K562 (cell line): ENCODE measurements at regions of chrX and their contacts with region 1.

Region 1: DNA sequence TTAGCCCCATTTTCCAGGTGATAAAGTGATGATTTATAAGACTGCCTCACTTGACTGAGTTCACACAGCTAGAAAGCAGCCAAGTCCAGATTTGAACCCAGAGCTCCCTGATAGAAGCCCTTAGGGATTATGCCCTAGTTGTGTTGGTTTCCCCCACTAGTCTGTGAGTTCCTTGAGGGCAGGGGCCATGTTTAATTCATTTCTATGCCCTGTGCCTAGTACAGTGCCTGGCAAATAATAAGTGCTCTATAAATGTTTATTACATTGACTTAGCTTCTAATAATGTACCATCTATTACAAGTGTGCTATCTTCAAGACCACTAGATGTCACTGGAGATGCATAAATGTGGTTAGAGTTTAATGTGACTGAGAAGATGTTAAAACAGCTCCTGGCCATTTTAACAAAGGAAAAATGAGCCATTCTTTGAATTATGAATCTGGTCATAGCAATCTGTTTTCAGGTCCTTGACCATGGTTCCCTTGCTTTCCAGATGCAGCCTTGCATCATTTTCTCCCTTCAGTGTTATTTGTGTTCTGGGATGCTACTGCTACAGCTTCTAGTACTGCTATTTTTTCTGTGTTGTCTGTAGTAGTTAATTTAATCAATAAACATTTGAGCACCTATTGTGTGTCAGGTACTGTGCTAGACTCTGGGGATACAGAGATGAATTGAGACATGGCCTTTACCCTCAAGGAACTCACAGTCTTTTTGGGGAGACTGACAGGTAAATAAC is 43.2 kb downstream of the SLC9A6 start:
- DNase-seq: peak in 3 of 4 experiments; percentile 13 to 46 (median 16)
- ATAC-seq: peak; percentile 75
- H3K4me3 ChIP-seq: no peak overlapping the region
- H3K27ac ChIP-seq: no peak overlapping the region
- H3K4me1 ChIP-seq: no peaks in the 10 kb centered on the region
- H3K27me3 ChIP-seq: no peaks in the 10 kb centered on the region
- CTCF ChIP-seq: peak; percentile 47 to 68 (median 53); a peak in 4 of 6 replicates
- EP300 ChIP-seq: no peak
- POLR2A ChIP-seq: no peak
- RAD21 ChIP-seq: peak; percentile 72 to 86

Region 2: DNA sequence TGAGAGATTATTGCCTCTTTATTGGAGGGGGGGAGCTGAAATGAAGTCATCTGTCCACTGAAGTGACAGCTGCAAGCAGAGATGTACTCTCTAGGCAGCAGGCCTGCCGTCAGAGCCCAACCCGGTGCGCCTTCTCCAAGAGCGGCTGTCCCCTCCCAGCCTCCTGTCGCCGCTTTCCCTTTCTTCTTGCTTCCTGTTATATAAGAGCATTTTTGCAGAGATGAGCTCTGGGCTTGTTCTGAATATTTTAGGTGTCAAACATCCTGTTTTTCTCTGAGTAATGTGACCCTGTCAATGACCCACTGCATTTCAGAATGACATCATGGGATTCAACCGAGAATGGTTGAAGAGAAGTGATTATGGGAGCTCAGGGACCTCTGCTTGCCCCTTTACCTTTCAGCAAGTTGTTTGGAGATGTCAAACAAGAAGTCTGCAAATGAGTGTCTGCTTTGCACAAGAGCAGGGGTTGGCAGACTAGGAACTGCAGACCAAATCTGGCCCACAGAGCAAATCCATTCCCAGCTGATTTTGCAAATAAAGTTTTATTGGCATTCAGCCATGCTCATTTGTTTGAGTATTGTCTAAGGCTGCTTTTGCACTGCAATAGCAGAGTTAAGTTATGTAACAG is 36.7 kb after region 1 on chrX:
- CTCF ChIA-PET with region 1: no interaction called
- POLR2A ChIA-PET with region 1: no interaction called
- in situ Hi-C with region 1: no loop called
- intact Hi-C with region 1: no loop called
- DNase-seq: no peak
- ATAC-seq: no peak
- H3K4me3 ChIP-seq: no peak overlapping the region
- H3K27ac ChIP-seq: no peak overlapping the region
- H3K4me1 ChIP-seq: no peaks in the 10 kb centered on the region; a peak in 1 of 5 replicates
- H3K27me3 ChIP-seq: peaks cover 26 to 28% of the 10 kb centered on the region in 2 experiments; a peak in 4 of 5 replicates
- CTCF ChIP-seq: no peak
- EP300 ChIP-seq: no peak
- POLR2A ChIP-seq: no peak
- RAD21 ChIP-seq: no peak

Region 3: GRCh38 chrX:136162831-136163570 is 134.6 kb after region 1 on chrX:
- CTCF ChIA-PET with region 1: interaction called, 11 read pairs
- POLR2A ChIA-PET with region 1: interaction called, 3 read pairs
- in situ Hi-C with region 1: loop called (anchors 25 kb)
- intact Hi-C with region 1: loop called (anchors 1 kb)
- DNase-seq: peak; percentile 49 to 64 (median 55)
- ATAC-seq: peak; percentile 99
- H3K4me3 ChIP-seq: no peak overlapping the region
- H3K27ac ChIP-seq: no peak overlapping the region
- H3K4me1 ChIP-seq: no peaks in the 10 kb centered on the region
- H3K27me3 ChIP-seq: peaks cover 3 to 14% of the 10 kb centered on the region in 2 experiments; a peak in 3 of 5 replicates
- CTCF ChIP-seq: peak; percentile 73 to 90 (median 85)
- EP300 ChIP-seq: no peak
- POLR2A ChIP-seq: no peak
- RAD21 ChIP-seq: peak; percentile 69 to 85

Region 4: GRCh38 chrX:136209016-136209738 is 180.8 kb after region 1 on chrX:
- CTCF ChIA-PET with region 1: interaction called, 3 read pairs
- POLR2A ChIA-PET with region 1: interaction called, 3 read pairs
- in situ Hi-C with region 1: no loop called
- intact Hi-C with region 1: loop called (anchors 5 kb)
- DNase-seq: peak; percentile 42 to 51 (median 50)
- ATAC-seq: peak; percentile 93
- H3K4me3 ChIP-seq: no peak overlapping the region
- H3K27ac ChIP-seq: no peak overlapping the region
- H3K4me1 ChIP-seq: peaks cover 0 to 3% of the 10 kb centered on the region in 2 experiments; a peak in 2 of 5 replicates
- H3K27me3 ChIP-seq: peaks cover 2 to 23% of the 10 kb centered on the region in 2 experiments; a peak in 4 of 5 replicates
- CTCF ChIP-seq: peak; percentile 60 to 65 (median 64)
- EP300 ChIP-seq: no peak
- POLR2A ChIP-seq: no peak
- RAD21 ChIP-seq: peak; percentile 54 to 68

Region 5: DNA sequence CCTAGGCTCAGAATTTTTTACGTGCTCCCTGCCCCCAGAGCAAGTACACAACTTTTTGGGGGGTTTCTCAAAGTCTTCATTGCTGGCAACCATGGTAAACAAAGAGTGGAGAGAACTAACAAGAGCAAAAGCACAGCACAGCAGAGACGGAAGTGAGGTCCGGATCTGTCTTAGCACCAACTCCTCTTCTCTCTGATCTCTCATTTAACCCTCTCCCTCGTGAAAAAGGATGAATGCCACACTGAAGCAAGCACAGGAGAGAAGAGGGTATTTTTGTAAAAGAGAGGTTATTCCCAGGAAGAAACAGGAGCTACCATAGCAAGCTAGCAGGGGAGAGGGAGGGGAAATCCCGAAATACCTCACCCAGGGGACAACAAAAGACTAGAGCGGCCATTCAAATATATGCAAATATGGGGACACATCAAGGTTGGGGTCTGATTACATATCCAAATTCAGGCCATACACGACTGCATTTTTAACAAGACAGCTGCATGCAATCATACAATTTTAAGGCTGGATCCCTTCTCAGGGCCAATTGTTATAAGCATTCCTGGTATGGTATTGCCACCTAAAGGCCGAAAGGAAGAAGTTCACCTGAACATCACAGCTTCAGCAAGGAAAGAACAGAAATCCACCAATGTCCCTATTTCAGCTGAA is 666.1 kb after region 1 on chrX:
- CTCF ChIA-PET with region 1: no interaction called
- POLR2A ChIA-PET with region 1: no interaction called
- in situ Hi-C with region 1: loop called (anchors 25 kb)
- intact Hi-C with region 1: loop called (anchors 10 kb)
- DNase-seq: peak; percentile 21 to 52 (median 37)
- ATAC-seq: peak; percentile 82
- H3K4me3 ChIP-seq: no peak overlapping the region
- H3K27ac ChIP-seq: no peak overlapping the region
- H3K4me1 ChIP-seq: no peaks in the 10 kb centered on the region; a peak in 1 of 5 replicates
- H3K27me3 ChIP-seq: no peaks in the 10 kb centered on the region
- CTCF ChIP-seq: peak; percentile 58 to 75 (median 66)
- EP300 ChIP-seq: no peak
- POLR2A ChIP-seq: no peak
- RAD21 ChIP-seq: peak; percentile 66 to 81